Left colon (tissue), 2 donors: ENCODE measurements at regions of chr6 and their contacts with region 1.

Region 1: GRCh38 chr6:39361657-39362486 is 39.4 kb upstream of the KCNK16 start:
- DNase-seq: peak; percentile 43 to 57
- ATAC-seq: peak; percentile 84

Region 2: GRCh38 chr6:39309942-39310531 is 51.8 kb before region 1 on chr6:
- intact Hi-C with region 1: no loop called
- DNase-seq: peak; percentile 68 to 79
- ATAC-seq: peak; percentile 91

Region 3: DNA sequence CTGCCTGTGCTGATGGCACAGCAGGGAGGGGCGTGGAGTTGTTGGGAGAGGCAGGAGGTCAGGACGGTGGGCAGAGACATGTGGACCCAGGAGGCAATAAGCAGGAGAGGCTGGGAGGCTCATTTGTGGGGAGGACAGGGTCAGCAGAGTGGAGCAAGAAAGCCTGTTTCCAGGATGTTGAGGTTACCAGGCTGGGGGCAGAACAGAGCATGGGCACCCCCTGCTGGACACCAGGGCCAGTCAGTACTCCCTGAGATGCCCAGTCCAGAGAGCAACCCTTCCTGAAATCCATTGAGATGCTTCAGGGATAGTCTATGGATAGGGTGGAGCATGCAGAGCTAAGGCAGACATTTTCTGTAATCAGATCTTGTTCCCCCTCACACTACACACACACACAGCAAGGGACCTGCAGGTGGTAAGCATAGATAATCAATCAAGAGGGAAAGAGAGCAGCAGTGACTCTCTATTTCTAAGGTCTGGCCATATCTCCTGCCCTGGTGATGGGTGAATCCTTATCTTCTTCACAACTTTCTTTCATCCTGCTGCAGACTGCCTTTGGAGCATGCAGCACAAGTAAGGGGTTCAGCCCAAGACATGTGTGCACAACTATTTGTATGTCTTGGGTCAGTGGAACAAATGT is 530.7 kb after region 1 on chr6:
- intact Hi-C with region 1: loop called in 1 of 2 experiments (anchors 5 kb)
- DNase-seq: peak; percentile 38 to 69
- ATAC-seq: peak; percentile 85